Activated B cell treated with CpG ODN at 0.5 μM for 24 hours (primary cell): ENCODE measurements at regions of chr14 and their contacts with region 1.

Region 1: DNA sequence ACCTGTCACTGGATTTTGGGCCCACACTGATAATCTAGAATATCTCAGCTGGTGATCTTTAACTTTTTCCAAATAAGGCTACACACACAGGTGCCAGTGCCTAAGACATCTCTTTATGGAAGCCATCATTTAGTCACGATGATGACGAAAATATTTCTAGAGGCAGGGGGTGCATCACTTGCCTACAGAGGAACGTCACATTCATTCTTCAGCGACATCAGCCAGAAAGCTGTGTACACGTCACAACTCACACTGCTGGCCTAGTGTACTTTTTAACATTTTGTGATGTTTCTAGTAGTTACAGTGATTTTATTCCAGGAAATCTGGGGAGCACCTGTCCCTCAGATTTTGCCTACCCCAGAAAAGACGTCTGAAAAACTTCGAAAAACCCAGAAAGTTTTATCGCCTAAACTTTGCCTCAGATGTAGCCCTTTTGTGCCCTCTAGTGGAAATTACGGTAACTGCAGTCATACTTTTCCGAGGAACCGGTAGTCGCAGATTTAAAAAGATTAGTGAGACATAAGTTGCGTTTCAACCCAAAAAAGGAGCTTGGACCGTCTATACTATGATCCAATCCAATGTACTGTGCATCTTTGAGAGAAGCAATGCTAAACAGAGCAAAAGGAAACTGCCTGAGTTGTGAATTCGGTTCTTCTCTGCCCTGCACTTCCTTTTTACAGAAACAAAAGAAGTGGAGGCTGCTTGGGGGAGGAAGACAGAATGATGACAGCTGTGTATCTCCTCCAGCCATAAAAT is 64.3 kb upstream of the STON2 start:
- DNase-seq: no peak
- ATAC-seq: peak; percentile 76
- H3K4me3 Mint-ChIP-seq: peak overlapping the region; percentile 81
- H3K27ac Mint-ChIP-seq: peak overlapping the region; percentile 76
- H3K4me1 Mint-ChIP-seq: peaks cover 6% of the 10 kb centered on the region
- H3K27me3 Mint-ChIP-seq: no peaks in the 10 kb centered on the region
- CTCF ChIP-seq: peak; percentile 77

Region 2: GRCh38 chr14:81269100-81269978 is 195.1 kb before region 1 on chr14:
- CTCF ChIA-PET with region 1: interaction called, 15 read pairs
- POLR2A ChIA-PET with region 1: interaction called, 3 read pairs
- intact Hi-C with region 1: loop called (anchors 1 kb)
- DNase-seq: no peak
- ATAC-seq: peak; percentile 62
- H3K4me3 Mint-ChIP-seq: no peak overlapping the region
- H3K27ac Mint-ChIP-seq: no peak overlapping the region
- H3K4me1 Mint-ChIP-seq: no peaks in the 10 kb centered on the region
- H3K27me3 Mint-ChIP-seq: peaks cover 14% of the 10 kb centered on the region
- CTCF ChIP-seq: no peak